ENCODE measurements at regions of chr7 and their contacts with region 1.

Region 1: DNA sequence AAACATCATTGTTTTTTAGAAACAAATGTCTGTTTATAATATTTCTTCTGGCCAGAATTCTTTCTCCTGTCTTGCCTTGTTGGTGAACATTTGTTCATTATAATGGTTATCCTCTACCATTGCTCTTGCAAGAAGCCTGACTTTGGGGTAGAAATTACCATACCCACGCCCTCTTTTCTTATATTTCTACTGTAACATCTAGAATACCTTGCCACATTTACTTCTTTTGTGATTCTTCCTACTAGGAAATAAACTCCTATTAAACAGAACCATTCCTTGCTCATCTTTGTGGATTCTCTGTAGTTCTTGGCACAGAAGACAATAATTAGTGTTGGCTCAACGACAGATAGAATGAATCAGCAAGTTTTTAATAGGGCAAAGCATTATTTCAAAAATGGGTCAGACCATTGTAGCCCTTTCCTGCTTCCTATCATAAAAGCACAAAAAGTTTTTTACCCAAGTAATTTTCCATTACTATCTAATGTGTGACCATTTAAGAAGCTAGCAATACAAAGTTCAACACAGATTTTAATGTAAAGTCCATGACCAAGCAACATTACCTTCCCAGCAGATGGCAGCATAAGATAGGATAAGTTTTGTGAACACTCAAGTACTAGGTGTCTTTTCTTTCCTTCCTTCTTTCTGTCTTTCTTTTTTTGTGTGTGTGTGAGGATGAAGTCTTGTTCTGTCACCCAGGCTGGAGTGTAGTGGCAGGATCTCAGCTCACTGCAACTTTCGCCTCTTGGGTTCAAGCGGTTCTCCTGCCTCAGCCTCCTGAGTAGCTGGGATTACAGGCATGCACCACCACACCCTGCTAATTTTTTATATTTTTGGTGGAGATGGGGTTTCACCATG is 270.4 kb downstream of the HGF start:
- DNase-seq: peak; percentile 53
- ATAC-seq: peak; percentile 88

Region 2: GRCh38 chr7:81420526-81421226 is 78.8 kb before region 1 on chr7:
- intact Hi-C with region 1: no loop called
- DNase-seq: no peak
- ATAC-seq: no peak

Region 3: GRCh38 chr7:81482600-81483186 is 16.8 kb before region 1 on chr7:
- intact Hi-C with region 1: loop called (anchors 2 kb)
- DNase-seq: no peak
- ATAC-seq: no peak

Region 4: GRCh38 chr7:81715984-81716588 is 216.6 kb after region 1 on chr7:
- intact Hi-C with region 1: loop called (anchors 10 kb)
- DNase-seq: no peak
- ATAC-seq: no peak

Region 5: GRCh38 chr7:81956520-81956919 is 457.0 kb after region 1 on chr7:
- intact Hi-C with region 1: loop called (anchors 1 kb)
- DNase-seq: no peak
- ATAC-seq: peak; percentile 83

Region 6: DNA sequence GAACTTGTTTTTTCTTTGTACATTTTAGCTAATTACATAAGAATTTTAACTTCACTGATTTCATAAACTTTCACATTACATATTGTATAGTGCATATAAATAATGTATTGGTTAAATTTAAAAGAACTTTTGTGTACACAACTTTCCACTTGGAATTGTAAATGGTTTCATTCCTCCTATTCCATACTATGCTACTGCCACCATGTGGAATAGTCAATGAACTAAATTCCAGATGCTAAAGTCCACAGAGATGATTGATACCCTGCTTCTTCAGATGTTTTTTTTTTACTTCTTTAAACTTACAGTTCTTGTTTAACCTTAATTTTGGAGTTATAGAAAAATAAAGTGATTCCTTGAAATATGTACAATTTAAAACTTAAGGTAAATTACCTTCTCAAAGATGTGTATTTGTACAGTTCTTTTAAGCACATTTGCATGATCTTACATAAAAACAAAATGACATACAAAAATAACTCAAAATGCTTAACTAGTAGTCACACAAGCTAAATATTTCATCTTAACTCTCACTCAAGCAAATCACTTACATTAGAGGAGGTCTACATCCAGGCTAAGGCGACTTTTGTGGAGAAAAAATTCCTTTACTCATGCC is 518.0 kb after region 1 on chr7:
- intact Hi-C with region 1: loop called (anchors 5 kb)
- DNase-seq: no peak
- ATAC-seq: no peak

Region 7: DNA sequence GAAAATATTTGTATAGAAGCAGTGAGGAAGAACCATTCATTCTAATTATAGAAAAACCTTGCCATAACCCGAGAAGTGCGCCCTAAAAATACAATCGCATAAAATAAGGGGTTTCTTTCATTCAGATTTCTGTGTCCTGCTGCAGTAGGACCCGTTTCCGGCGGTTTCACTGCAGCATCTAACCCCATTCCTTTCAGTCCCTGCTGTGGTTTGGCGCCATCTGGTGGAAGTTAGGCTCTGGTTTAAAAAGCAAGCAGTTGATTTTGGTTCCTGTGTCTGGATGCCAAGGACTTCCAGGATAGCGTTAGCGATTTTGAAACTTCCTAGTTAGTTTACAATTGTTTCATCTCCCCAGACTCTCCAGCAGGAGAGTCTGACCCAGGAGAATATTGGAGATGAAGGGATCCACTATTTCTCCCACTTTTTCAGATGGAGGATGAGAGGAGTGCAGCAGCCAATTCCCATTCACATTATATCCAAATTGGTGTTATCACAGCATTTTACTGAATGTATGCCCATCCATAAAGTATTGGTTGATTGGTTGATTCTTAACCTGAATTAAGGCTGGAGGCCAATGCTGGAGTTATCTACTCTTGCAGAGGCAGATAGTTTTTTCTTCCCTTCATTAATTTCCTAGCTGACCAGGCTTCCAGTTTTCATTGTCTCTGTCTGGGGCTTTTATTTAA is 1072.8 kb after region 1 on chr7:
- intact Hi-C with region 1: loop called (anchors 10 kb)
- DNase-seq: peak; percentile 77
- ATAC-seq: peak; percentile 83

Region 8: GRCh38 chr7:82729172-82730030 is 1229.9 kb after region 1 on chr7:
- intact Hi-C with region 1: loop called (anchors 2 kb)
- DNase-seq: no peak
- ATAC-seq: no peak

Measured in Right ventricle myocardium inferior (tissue), 1 donor.